ENCODE measurements at regions of chr6 and their contacts with region 1.

Region 1: DNA sequence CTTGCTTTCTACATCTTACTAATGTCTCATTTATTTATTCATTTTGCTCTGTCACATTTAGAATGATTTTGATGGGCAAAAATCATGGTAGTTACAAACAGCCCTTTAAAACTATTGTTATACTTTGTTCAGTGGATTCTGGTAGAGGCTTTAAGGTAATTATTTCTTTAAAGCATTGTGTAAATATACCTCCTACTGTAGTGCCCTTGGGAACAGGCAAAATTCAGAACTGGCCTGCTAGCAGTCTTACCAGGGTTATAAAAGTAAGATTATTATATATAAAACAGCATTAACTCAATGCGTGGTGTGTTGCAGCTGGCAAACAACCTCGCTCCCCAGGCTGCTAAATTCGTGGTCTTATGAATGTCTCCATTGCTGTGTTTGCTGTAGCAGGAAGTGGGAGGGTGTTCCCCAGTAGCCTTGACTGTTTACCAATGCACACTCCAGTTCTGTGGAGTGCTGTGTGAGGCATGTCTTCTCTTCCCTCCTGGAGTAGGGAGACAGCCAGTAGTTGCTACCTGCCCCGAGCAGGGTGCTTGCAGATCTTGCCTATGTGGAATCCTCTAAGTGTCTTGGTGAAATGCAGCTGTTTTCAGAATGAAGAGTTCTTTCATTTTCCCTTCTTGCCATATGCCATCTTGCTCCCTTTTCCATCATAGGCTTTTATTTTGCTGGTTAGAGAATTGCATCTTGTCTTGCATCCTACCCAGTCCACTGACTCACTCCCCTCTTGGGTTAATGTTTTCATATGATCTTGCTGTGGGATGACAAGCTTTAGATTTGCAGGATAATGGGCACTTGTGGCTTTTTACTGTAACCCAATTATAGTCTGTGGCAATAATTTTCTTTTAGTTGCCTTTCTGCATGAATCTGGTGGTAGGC is 45.3 kb downstream of the IGF2R start:
- DNase-seq: no peak
- ATAC-seq: no peak
- H3K4me3 Mint-ChIP-seq: no peak overlapping the region
- H3K27ac Mint-ChIP-seq: no peak overlapping the region
- H3K4me1 Mint-ChIP-seq: peaks cover 19% of the 10 kb centered on the region
- H3K27me3 Mint-ChIP-seq: no peaks in the 10 kb centered on the region
- CTCF ChIP-seq: no peak

Region 2: DNA sequence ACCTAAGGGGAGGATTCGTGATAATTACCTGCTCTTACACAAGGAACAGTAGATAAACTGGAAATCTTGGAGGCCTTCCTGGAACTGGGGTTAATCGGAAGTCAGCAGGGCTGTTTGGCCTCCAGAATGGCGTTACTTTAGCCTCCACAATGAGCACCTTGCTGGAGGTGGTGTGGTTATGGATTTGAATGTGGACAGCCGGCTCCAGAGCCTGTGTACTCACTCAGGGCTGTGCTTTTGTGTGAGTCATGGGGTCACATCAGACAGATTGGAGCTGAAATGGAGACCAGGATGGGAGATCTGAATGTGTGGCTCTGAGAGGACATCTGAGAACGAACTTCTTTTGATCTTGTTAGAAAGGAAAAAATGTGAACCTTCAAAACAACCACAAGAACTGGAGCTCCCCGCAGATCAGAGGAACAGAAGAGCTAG is 15.0 kb before region 1 on chr6:
- CTCF ChIA-PET with region 1: no interaction called
- POLR2A ChIA-PET with region 1: no interaction called
- intact Hi-C with region 1: loop called (anchors 2 kb)
- DNase-seq: no peak
- ATAC-seq: no peak
- H3K4me3 Mint-ChIP-seq: no peak overlapping the region
- H3K27ac Mint-ChIP-seq: no peak overlapping the region
- H3K4me1 Mint-ChIP-seq: peaks cover 6% of the 10 kb centered on the region
- H3K27me3 Mint-ChIP-seq: no peaks in the 10 kb centered on the region
- CTCF ChIP-seq: no peak

Region 3: GRCh38 chr6:160102956-160103824 is 89.0 kb after region 1 on chr6:
- CTCF ChIA-PET with region 1: no interaction called
- POLR2A ChIA-PET with region 1: no interaction called
- intact Hi-C with region 1: no loop called
- DNase-seq: no peak
- ATAC-seq: peak; percentile 45
- H3K4me3 Mint-ChIP-seq: no peak overlapping the region
- H3K27ac Mint-ChIP-seq: no peak overlapping the region
- H3K4me1 Mint-ChIP-seq: no peaks in the 10 kb centered on the region
- H3K27me3 Mint-ChIP-seq: no peaks in the 10 kb centered on the region
- CTCF ChIP-seq: no peak